ENCODE measurements at regions of chr1 and their contacts with region 1.

Region 1: DNA sequence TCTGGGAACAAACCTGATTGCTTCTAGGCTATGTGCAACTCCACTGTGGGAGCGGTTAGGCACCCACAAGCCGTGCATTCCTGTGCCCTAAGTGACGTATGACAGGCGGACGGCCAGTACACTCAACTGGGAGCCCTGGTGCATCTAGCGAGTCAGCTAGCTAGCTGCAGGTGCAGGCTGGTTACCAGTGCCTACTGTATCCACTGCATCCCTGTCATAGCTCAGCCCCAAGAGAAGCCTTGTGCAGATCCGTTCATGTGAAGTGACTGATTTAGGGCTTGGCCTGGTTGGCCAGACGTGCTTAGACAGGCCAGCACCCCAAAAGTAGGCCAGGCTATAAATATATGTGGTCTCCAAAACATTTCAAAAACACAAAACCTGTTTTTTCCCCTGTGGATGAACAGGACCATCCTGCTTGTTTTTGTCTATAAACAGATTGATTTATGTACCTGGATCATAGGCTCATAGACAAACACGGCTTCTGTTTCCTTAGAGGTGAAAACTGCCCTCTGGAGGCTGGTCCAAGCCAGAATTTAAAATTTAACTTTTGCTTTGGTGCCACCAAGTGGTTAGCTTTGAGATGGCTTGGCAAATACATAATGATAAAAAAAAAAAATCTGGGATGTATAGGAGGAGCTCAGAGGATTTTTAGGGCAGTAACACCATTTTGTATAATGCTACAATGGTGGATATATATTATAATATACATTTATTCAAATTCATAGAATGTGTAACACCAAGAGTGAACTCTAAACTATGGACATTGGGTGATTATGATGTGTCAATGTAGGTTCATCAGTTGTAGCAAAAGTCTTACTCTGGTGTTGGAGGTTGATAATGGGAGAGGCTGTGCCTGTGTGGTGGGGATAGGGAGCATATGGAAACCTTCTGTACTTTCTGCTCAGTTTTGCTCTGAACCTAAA is 68.5 kb downstream of the GIPC2 start:
- DNase-seq: peak in 4 of 5 donors; percentile 37 to 52 (median 47)
- ATAC-seq: peak; percentile 45 to 85 (median 73)
- H3K4me3 ChIP-seq: peak overlapping the region in 2 of 12 donors; percentile 1 to 11
- H3K27ac ChIP-seq: peak overlapping the region in 4 of 12 donors; percentile 22 to 63 (median 40)
- H3K4me1 ChIP-seq: peaks cover 0 to 7% (median 5%) of the 10 kb centered on the region in 12 donors
- H3K27me3 ChIP-seq: no peaks in the 10 kb centered on the region
- CTCF ChIP-seq: peak; percentile 79 to 98 (median 88)
- POLR2A ChIP-seq: no peak

Region 2: DNA sequence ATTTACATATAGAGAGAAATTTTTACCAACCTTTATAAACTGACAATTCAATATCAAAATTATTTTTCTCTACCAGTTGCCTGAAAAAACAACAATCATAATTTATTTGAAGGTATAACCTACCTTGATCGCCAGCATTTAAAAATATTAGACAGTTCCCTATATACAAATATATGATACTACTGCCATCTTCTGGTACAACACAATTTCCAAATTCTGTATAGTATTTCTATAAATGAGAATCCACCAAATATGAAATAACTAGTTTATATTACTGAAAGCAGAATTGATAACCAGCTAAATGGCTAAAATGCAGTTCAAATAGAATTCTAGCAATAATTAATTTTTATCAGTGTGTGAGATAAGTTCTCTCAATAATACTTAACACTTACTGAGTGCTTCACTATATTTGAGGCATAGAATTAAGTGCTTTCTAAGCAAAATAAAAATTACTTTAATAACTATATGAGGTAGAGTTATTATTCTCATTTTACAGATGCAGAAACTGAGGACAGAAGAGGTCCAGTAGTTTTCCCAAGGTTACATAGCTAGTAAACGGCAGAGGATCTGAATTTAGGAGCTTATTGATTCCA is 970.7 kb before region 1 on chr1:
- intact Hi-C with region 1: loop called in 1 of 10 experiments (anchors 10 kb)
- DNase-seq: no peak
- ATAC-seq: no peak
- H3K4me3 ChIP-seq: no peak overlapping the region
- H3K27ac ChIP-seq: no peak overlapping the region
- H3K4me1 ChIP-seq: no peaks in the 10 kb centered on the region
- H3K27me3 ChIP-seq: no peaks in the 10 kb centered on the region
- CTCF ChIP-seq: peak in 9 of 12 donors; percentile 14 to 46 (median 31)
- POLR2A ChIP-seq: no peak

Region 3: DNA sequence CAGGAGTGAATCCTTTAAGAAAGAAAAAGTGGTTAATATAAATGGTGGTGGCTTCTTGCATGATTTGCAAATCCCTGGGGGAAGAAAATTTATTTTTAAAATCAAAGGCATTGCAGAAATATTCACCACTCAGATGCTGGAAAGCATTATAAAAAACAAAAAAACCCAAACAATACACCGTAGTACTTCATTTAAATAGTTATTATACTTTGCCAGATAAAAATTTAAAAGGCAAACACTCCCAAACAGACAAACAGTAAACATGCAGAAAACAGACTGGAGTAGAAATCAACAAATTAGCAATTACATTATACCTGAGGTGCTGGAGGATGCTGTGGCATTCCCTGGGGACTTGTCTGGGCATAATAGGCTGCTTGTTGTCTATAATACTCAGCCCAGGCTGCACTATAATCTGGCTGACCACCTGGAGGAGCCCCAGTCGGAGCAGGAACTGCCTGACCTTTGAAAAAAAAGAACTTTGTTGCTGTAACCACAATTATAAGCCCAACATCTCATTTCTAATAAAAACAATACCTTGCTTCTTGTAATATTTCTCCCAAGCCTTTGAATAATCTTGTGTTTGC is 165.4 kb before region 1 on chr1:
- intact Hi-C with region 1: loop called in 1 of 10 experiments (anchors 10 kb)
- DNase-seq: peak in 3 of 5 donors; percentile 24 to 33 (median 29)
- ATAC-seq: peak; percentile 38 to 78 (median 50)
- H3K4me3 ChIP-seq: no peak overlapping the region
- H3K27ac ChIP-seq: no peak overlapping the region
- H3K4me1 ChIP-seq: peaks cover 0 to 20% (median 11%) of the 10 kb centered on the region in 12 donors
- H3K27me3 ChIP-seq: no peaks in the 10 kb centered on the region
- CTCF ChIP-seq: peak in 8 of 12 donors; percentile 5 to 43 (median 26)
- POLR2A ChIP-seq: no peak

Region 4: GRCh38 chr1:78004719-78005447 is 109.4 kb before region 1 on chr1 and contains the start of gene DNAJB4:
- intact Hi-C with region 1: loop called in 1 of 10 experiments (anchors 10 kb)
- DNase-seq: peak in 4 of 5 donors; percentile 51 to 86 (median 81)
- ATAC-seq: peak; percentile 99 to 100 (median 99)
- H3K4me3 ChIP-seq: peak within 1 kb of the TSS; percentile 33 to 73 (median 64)
- H3K27ac ChIP-seq: peak within 1 kb of the TSS; percentile 89 to 96 (median 92)
- H3K4me1 ChIP-seq: peaks cover 0 to 52% (median 19%) of the 10 kb centered on the region in 12 donors
- H3K27me3 ChIP-seq: no peaks in the 10 kb centered on the region
- CTCF ChIP-seq: no peak
- POLR2A ChIP-seq: peak; percentile 98 to 99
- total RNA-seq, gene DNAJB4: 56.7 to 190 (median 95.9) TPM

Region 5: DNA sequence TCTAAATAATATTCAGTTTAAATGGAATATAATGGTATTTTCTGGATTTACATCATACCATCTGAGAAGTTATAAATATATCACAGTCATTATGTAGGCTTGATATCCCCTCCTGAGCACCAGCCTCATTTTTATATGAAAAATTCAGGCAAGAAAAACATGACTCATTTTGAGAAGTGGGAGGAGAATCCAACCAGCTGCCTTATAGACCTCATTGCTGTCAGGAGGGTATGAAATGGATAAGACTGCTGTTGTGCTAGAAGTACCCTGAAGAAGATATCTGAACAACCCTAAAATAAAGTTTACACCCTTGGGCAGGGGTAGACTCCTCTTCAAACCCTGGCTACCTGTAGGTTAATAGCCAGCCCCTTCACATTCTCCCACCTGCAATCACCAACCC is 59.7 kb before region 1 on chr1:
- intact Hi-C with region 1: loop called in 5 of 10 experiments (anchors 5 to 10 kb)
- DNase-seq: no peak
- ATAC-seq: no peak
- H3K4me3 ChIP-seq: no peak overlapping the region
- H3K27ac ChIP-seq: no peak overlapping the region
- H3K4me1 ChIP-seq: peaks cover 0 to 31% (median 12%) of the 10 kb centered on the region in 12 donors
- H3K27me3 ChIP-seq: no peaks in the 10 kb centered on the region
- CTCF ChIP-seq: no peak
- POLR2A ChIP-seq: no peak

Measured in heart left ventricle (tissue), 16 donors.